ENCODE measurements at regions of chr18 and their contacts with region 1.

Region 1: DNA sequence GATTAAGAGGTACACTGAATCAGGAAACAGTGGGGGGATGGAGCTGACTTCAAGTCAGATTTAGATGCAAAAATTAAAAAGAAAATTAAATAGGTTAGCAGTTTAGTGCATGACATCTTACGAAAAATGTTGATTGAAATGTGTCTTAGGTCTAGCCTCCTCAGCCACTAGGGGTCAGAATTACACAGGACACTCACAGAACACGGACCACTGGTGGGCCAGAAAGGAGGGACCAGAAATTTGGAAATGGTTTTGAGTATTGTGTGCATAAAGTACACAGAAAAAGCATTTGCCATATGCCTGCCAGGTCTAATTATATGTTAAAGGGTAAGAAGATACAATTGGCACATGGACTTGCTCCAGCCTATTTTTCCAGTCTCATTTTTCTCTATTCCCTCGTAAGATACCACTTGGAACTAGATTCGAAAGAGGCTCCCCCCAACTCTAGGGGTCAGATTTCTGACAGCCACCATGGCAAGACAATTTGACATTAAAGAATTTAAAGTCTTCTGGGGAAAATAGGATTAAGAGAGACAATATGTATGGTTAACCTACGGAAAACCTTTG is 550.2 kb upstream of the SETBP1 start:
- DNase-seq: peak; percentile 61
- H3K4me3 Mint-ChIP-seq: no peak overlapping the region
- H3K27ac Mint-ChIP-seq: no peak overlapping the region
- H3K4me1 Mint-ChIP-seq: peaks cover 6% of the 10 kb centered on the region
- H3K27me3 Mint-ChIP-seq: no peaks in the 10 kb centered on the region
- CTCF ChIP-seq: peak; percentile 78

Region 2: DNA sequence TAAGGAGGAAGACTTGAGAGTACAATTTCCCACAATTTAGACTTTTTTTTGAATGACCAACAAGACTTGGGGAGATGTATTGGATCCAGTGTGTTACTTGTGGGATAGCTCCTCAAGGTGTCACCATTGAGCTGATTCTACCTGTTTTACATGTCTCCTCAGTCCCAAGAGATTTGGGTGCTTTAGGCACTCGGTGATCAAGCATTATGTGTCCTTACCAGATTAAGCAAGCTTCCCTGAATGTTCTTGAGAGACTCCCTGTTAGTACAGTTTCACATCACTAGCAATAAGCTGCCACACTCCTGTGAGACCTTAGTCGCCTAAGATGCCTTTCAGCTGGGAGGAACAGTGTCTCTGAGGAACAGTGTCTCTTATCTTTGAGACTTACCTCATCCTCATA is 468.9 kb before region 1 on chr18:
- CTCF ChIA-PET with region 1: interaction called, 6 read pairs
- POLR2A ChIA-PET with region 1: no interaction called
- intact Hi-C with region 1: loop called (anchors 5 kb)
- DNase-seq: peak; percentile 87
- H3K4me3 Mint-ChIP-seq: no peak overlapping the region
- H3K27ac Mint-ChIP-seq: no peak overlapping the region
- H3K4me1 Mint-ChIP-seq: peaks cover 21% of the 10 kb centered on the region
- H3K27me3 Mint-ChIP-seq: no peaks in the 10 kb centered on the region
- CTCF ChIP-seq: peak; percentile 57

Region 3: GRCh38 chr18:44093253-44093652 is 37.2 kb before region 1 on chr18:
- CTCF ChIA-PET with region 1: no interaction called
- POLR2A ChIA-PET with region 1: no interaction called
- intact Hi-C with region 1: no loop called
- DNase-seq: no peak
- H3K4me3 Mint-ChIP-seq: no peak overlapping the region
- H3K27ac Mint-ChIP-seq: no peak overlapping the region
- H3K4me1 Mint-ChIP-seq: peaks cover 8% of the 10 kb centered on the region
- H3K27me3 Mint-ChIP-seq: no peaks in the 10 kb centered on the region
- CTCF ChIP-seq: no peak

Region 4: DNA sequence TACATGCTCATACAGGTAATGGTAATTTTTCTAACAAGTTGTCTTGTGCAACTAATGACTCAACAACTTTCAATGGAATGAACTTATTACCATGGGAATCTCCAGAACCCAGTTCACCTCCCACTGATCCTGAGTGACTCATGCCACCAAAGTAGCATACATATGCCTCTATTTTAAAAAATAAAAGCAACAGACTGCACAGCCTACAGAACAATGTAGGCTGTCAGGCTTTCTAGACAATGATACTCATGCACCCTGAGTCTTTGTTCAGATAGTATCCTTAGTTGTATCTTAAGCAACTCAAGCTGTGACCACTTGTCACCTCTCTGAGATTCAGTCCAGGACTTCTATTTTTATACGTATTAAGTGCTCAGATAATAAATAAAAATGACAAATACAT is 19.2 kb after region 1 on chr18:
- CTCF ChIA-PET with region 1: interaction called, 14 read pairs
- POLR2A ChIA-PET with region 1: no interaction called
- intact Hi-C with region 1: no loop called
- DNase-seq: peak; percentile 91
- H3K4me3 Mint-ChIP-seq: no peak overlapping the region
- H3K27ac Mint-ChIP-seq: no peak overlapping the region
- H3K4me1 Mint-ChIP-seq: peaks cover 17% of the 10 kb centered on the region
- H3K27me3 Mint-ChIP-seq: no peaks in the 10 kb centered on the region
- CTCF ChIP-seq: no peak

Region 5: DNA sequence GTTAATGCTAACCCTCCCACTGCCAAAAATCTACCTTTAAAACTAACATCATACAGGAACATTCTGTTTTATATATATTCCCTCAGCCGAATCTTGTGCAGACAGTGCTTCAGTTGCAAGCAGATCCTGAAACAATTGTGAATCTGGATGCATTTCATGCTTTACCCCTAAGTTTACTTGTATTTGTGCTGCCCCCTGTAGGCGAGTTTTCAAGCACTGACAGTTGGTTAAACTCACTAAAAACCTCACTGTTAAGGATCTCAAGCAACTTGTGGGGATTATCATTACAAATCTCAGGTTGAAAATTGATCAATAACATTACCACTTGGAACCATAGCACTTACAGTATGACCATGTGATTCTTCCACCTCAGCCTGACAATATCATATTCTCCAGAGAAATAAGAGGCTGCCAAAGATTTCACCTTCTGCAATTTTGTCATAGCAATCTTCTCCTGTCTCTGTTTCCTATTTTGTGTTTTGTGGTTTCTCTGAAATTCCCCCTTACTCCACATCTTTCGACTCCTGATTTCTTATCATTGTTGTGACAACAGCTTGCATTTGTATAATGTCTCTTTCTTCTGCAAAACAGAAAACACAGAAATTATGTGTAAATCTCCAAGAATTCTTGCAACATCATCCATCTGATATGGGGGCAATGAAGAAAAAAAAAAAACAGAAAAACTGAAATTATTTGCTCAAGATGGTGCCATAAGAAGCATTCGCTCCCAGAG is 195.6 kb after region 1 on chr18:
- CTCF ChIA-PET with region 1: interaction called, 9 read pairs
- POLR2A ChIA-PET with region 1: no interaction called
- intact Hi-C with region 1: loop called (anchors 1 kb)
- DNase-seq: peak; percentile 78
- H3K4me3 Mint-ChIP-seq: no peak overlapping the region
- H3K27ac Mint-ChIP-seq: no peak overlapping the region
- H3K4me1 Mint-ChIP-seq: no peaks in the 10 kb centered on the region
- H3K27me3 Mint-ChIP-seq: no peaks in the 10 kb centered on the region
- CTCF ChIP-seq: peak; percentile 54

Region 6: GRCh38 chr18:45384137-45384961 is 1253.9 kb after region 1 on chr18:
- CTCF ChIA-PET with region 1: interaction called, 7 read pairs
- POLR2A ChIA-PET with region 1: no interaction called
- intact Hi-C with region 1: loop called (anchors 1 kb)
- DNase-seq: peak; percentile 72
- H3K4me3 Mint-ChIP-seq: no peak overlapping the region
- H3K27ac Mint-ChIP-seq: no peak overlapping the region
- H3K4me1 Mint-ChIP-seq: peaks cover 6% of the 10 kb centered on the region
- H3K27me3 Mint-ChIP-seq: no peaks in the 10 kb centered on the region
- CTCF ChIP-seq: peak; percentile 69

Measured in MCF 10A (cell line).